PC-9 (cell line): ENCODE measurements at regions of chr7 and their contacts with region 1.

Region 1: GRCh38 chr7:93799750-93800357 is 90.7 kb downstream of the TFPI2 start:
- DNase-seq: no peak
- H3K4me3 ChIP-seq: no peak overlapping the region
- H3K27ac ChIP-seq: no peak overlapping the region
- H3K4me1 ChIP-seq: no peaks in the 10 kb centered on the region
- H3K27me3 ChIP-seq: no peaks in the 10 kb centered on the region
- CTCF ChIP-seq: peak; percentile 76

Region 2: DNA sequence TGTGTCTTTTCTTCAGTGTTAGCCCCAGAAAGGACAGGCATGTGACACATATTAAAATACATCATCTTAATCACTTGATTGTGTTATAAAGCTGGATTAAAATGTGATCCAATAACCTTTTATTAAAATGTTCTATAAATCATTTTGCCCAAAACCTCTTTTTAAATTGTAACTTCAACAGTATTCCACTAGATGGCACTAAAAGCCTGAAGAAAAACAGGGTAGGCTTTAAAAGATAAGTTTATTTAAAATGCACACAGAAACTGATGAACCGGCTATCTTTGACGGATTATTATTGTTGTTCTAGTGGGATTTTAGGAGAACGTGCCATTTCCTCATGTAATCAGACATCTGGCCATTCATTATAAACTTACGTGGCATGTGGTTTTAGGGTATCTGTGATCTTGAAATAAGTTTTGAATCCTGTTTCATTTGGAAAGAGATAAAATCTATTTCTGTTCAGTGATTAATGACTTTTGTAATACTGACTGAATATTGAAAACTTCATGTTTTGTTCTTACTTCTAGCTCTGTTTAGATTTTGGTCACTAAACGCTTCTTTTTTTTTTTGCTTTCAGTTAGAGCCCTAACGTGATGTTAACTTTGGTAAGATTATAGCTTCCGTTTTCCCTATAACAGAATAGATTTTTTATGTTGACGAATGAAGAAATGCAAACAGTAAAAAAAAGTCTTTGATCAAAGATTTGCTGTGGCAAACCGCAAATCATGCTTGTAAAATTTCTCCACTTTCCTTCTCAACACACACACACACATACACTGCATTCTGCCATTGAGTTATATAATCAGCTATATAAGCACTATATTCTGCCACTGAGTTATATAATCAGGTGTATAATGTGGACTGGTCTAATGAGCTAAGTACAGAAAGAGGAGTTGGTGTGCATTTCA is 554.1 kb before region 1 on chr7:
- CTCF ChIA-PET with region 1: no interaction called
- POLR2A ChIA-PET with region 1: no interaction called
- intact Hi-C with region 1: loop called (anchors 1 kb)
- DNase-seq: no peak
- H3K4me3 ChIP-seq: no peak overlapping the region
- H3K27ac ChIP-seq: no peak overlapping the region
- H3K4me1 ChIP-seq: no peaks in the 10 kb centered on the region
- H3K27me3 ChIP-seq: no peaks in the 10 kb centered on the region
- CTCF ChIP-seq: peak; percentile 79

Region 3: DNA sequence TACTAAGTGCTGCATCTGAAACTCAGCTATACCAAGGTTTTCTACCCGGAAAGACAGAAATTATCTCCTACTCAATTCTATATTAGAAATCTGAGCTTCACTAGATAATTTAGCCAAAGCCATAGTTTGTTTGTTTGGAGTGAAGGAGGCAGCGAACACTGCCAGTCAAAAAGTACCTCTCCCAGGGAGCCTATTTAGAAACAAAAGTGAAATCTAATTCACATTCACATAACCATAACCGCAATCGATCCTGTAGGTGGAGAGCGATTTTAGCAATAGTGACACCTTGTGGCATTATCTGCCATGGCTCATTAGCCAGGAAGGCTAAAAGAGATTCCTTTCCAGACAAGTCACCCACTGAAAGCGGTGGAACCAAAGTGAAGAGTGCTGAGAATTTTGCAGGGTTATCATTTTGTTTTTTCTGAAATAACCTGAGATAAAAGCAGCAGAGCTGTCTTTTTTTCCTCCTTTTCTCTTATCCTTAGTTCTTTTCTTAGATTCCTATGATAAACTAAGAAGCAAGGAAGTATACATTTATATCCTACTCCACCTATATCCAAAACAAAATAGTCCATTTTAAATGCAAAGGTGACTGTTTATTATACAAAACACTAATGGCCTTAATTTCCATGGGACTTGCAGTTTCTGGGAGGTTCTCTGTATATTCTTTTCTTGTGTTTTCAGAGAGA is 288.0 kb after region 1 on chr7:
- CTCF ChIA-PET with region 1: no interaction called
- POLR2A ChIA-PET with region 1: no interaction called
- intact Hi-C with region 1: loop called (anchors 1 kb)
- DNase-seq: peak; percentile 57 to 62
- H3K4me3 ChIP-seq: no peak overlapping the region
- H3K27ac ChIP-seq: no peak overlapping the region
- H3K4me1 ChIP-seq: no peaks in the 10 kb centered on the region
- H3K27me3 ChIP-seq: no peaks in the 10 kb centered on the region
- CTCF ChIP-seq: peak; percentile 80

Region 4: GRCh38 chr7:94223375-94224070 is 423.7 kb after region 1 on chr7:
- CTCF ChIA-PET with region 1: no interaction called
- POLR2A ChIA-PET with region 1: no interaction called
- intact Hi-C with region 1: loop called (anchors 5 kb)
- DNase-seq: peak in 1 of 2 experiments; percentile 57
- H3K4me3 ChIP-seq: no peak overlapping the region
- H3K27ac ChIP-seq: no peak overlapping the region
- H3K4me1 ChIP-seq: no peaks in the 10 kb centered on the region
- H3K27me3 ChIP-seq: no peaks in the 10 kb centered on the region
- CTCF ChIP-seq: no peak

Region 5: GRCh38 chr7:94276795-94277194 is 476.9 kb after region 1 on chr7:
- CTCF ChIA-PET with region 1: interaction called, 3 read pairs
- POLR2A ChIA-PET with region 1: no interaction called
- intact Hi-C with region 1: loop called (anchors 5 kb)
- DNase-seq: peak in 1 of 2 experiments; percentile 12
- H3K4me3 ChIP-seq: no peak overlapping the region
- H3K27ac ChIP-seq: no peak overlapping the region
- H3K4me1 ChIP-seq: no peaks in the 10 kb centered on the region
- H3K27me3 ChIP-seq: no peaks in the 10 kb centered on the region
- CTCF ChIP-seq: peak; percentile 49

Region 6: DNA sequence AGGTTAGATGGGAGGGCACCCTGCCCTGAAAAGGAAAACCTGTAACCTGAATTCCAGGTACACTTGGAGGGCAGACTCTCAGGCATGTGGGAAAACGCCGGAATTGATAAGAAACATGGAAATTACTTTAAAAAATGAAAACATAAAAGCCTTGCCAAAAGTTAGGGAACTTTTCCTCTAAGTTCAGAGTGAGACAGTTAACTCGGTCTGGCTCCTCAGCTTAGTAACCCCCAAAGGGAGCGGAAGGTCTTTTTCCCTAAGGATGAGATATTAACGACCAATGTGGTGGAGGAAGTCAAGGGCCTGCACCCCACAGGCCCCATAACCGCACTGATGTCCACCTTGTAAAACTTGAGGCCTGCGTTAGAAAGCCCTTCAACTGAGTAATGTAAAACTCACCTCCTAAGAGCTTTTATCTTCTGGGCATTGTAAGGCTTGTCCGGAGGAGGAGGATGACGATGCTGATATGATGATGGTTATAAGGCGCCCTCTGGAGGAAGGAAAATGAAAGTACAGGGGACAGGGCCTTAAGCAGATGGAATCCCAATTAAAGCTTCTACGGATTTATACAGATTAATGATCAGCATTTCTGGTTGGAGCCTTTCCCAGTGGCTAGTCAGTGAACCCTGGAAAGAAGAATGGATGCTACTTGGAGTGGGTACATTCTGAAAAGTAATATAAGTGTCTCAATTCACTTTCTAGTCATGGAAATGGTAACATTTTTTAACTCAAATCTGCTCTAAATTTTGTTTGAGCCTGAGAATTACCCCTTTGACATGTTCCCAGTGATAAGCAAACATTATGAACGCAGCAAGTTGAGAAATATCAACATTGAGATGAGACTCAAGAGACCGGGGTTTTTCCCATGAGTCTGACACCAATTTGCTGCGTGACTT is 595.5 kb after region 1 on chr7:
- CTCF ChIA-PET with region 1: no interaction called
- POLR2A ChIA-PET with region 1: no interaction called
- intact Hi-C with region 1: loop called (anchors 5 kb)
- DNase-seq: no peak
- H3K4me3 ChIP-seq: no peak overlapping the region
- H3K27ac ChIP-seq: no peak overlapping the region
- H3K4me1 ChIP-seq: 0 out of 2 replicates have a peak, but pooled peaks cover under 1% of the 10 kb centered on the region
- H3K27me3 ChIP-seq: no peaks in the 10 kb centered on the region
- CTCF ChIP-seq: peak; percentile 66

Region 7: DNA sequence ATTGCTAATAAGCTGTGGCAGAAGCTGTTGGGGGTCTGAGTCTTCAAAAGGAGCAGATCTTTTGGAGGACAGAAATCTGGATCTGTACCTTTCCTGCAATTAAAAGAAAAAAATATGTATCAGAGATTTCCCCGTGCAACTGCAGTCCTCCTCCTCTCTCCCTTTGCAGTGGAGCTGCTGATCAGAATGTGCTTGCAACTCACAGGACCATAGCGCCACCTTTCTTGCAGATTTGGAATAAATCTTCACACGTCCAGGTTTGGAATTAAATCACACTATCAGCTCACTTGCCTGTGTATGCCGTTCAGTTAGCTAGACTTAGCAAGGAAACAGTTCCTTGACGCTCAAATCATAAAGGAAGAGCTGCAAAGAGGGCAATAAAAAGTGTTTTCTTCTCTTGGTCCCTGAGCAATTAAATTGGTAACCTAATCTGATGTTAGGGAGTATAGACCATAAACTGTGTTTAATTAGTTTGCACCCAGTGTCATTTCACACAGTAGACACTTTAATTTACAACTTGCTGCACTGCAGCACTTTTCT is 1447.0 kb after region 1 on chr7:
- CTCF ChIA-PET with region 1: no interaction called
- POLR2A ChIA-PET with region 1: no interaction called
- intact Hi-C with region 1: loop called (anchors 10 kb)
- DNase-seq: peak; percentile 47 to 48
- H3K4me3 ChIP-seq: no peak overlapping the region
- H3K27ac ChIP-seq: no peak overlapping the region
- H3K4me1 ChIP-seq: no peaks in the 10 kb centered on the region
- H3K27me3 ChIP-seq: no peaks in the 10 kb centered on the region
- CTCF ChIP-seq: peak; percentile 83